Natural killer cell (primary cell): ENCODE measurements at regions of chr3 and their contacts with region 1.

Region 1: GRCh38 chr3:128680602-128681368 is 30.2 kb upstream of the RPN1 start:
- DNase-seq: peak; percentile 93 to 98
- ATAC-seq: peak; percentile 87 to 97 (median 90)
- H3K4me3 ChIP-seq: peak overlapping the region; percentile 88
- H3K4me3 Mint-ChIP-seq: peak overlapping the region; percentile 93
- H3K27ac ChIP-seq: peak overlapping the region; percentile 99
- H3K27ac Mint-ChIP-seq: peak overlapping the region; percentile 81 to 99
- H3K4me1 ChIP-seq: peaks cover 42% of the 10 kb centered on the region
- H3K4me1 Mint-ChIP-seq: peaks cover 28 to 36% of the 10 kb centered on the region in 2 donors
- H3K27me3 ChIP-seq: no peaks in the 10 kb centered on the region
- H3K27me3 Mint-ChIP-seq: peaks cover 6 to 7% of the 10 kb centered on the region in 2 donors
- CTCF ChIP-seq: peak; percentile 95

Region 2: DNA sequence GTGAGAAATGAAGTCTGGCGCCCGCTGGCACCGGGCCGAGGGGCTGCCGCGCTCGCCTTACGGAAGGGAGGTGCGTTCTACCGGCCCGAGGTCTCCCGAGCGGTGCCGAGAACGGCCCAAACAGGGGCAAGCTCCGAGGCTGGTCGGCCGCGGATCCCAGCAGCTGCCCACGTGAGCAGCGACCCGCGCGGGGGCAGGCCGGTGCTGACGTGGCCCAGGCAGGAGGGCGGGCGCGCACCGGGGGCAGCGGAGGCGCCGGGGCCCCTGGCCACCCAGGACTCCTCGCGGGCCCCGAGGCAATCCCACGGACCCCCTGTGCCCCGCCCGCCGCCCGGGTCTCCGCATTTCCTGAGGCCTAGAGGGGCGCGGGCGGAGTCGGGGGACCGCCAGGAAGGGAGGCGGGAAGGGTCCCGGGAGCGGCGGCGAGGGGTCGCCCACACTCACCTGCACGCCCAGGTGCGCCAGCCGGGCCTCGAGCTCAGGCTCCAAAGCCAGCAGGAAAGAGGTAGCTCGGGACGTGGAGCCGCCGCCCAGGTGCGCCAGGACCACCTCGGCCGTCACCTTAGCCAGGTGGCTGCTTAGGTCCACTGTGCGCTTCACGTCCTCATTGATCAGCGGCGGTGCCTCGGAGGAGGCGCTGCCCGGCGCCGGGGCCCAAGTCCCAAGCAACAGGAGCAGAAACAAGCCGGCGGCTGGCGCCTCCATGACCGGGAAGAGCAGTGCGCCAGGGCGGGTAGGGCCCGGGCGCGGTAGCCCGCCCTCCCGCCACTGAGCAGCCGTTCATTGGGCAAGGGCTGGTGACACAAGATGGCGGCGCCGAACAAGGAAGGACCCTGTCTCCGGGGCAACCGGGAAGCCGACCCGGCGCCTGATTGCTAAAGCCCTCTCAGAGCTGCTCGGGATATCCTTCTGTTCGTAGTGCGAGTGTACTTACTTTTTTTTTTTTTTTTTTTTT is 30.4 kb before region 1 on chr3 and contains the start of gene RPN1:
- intact Hi-C with region 1: loop called (anchors 1 kb)
- DNase-seq: peak; percentile 92 to 97
- ATAC-seq: peak; percentile 94 to 99 (median 98)
- H3K4me3 ChIP-seq: peak within 1 kb of the TSS; percentile 100
- H3K4me3 Mint-ChIP-seq: peak within 1 kb of the TSS; percentile 92
- H3K27ac ChIP-seq: peak within 1 kb of the TSS; percentile 98
- H3K27ac Mint-ChIP-seq: peak within 1 kb of the TSS; percentile 86 to 92
- H3K4me1 ChIP-seq: peaks cover 15% of the 10 kb centered on the region
- H3K4me1 Mint-ChIP-seq: peaks cover 28 to 31% of the 10 kb centered on the region in 2 donors
- H3K27me3 ChIP-seq: no peaks in the 10 kb centered on the region
- H3K27me3 Mint-ChIP-seq: no peaks in the 10 kb centered on the region
- CTCF ChIP-seq: no peak
- total RNA-seq, gene RPN1: 90.5 to 130 (median 92.1) TPM

Region 3: DNA sequence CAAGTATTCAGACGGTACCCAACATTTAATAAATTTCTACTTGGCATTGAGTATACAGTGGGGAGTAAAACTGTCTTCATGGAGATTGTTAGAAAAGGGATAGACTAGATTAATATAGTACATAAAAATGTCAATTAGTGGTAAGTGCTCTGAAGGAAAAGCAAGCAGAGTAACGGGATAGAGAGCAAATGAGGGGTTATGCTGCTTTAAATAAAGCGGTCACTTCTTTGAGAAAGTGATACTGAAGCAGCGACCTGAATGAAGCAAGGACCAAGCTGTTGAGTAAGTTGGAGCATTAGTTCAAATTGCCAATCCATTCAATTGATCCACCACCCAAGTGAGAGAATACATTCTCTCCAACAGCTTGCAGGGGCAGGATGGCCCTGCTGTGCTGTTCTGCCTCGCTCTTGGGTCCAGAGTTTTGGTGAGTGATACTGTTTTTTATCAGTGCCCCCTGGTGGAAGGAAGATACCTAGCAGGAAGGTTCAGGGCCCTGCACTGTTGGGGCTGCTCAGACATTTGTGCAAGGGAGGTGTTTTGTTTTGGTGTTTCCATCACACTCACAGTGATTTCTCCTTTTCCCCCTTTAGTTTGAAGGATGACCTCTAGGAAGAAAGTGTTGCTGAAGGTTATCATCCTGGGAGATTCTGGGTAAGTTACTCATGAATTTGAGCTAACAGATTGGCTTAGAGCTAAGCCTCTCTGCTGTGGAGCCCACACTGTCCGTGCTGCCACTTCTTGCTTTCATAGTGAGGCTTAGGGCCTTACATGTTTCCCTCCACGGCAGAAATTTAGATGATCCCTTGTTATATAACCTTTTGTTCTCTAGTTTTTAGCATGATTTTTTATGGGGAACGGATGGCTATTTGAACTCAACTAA is 114.2 kb after region 1 on chr3:
- intact Hi-C with region 1: loop called (anchors 1 kb)
- DNase-seq: peak; percentile 47 to 87
- ATAC-seq: peak; percentile 98 to 100 (median 99)
- H3K4me3 ChIP-seq: no peak overlapping the region
- H3K4me3 Mint-ChIP-seq: no peak overlapping the region
- H3K27ac ChIP-seq: no peak overlapping the region
- H3K27ac Mint-ChIP-seq: peak overlapping the region; percentile 61 to 72
- H3K4me1 ChIP-seq: peaks cover 18% of the 10 kb centered on the region
- H3K4me1 Mint-ChIP-seq: peaks cover 22 to 45% of the 10 kb centered on the region in 2 donors
- H3K27me3 ChIP-seq: no peaks in the 10 kb centered on the region
- H3K27me3 Mint-ChIP-seq: no peaks in the 10 kb centered on the region
- CTCF ChIP-seq: peak; percentile 74

Region 4: GRCh38 chr3:128845778-128846485 is 165.1 kb after region 1 on chr3:
- intact Hi-C with region 1: loop called (anchors 1 kb)
- DNase-seq: peak; percentile 73 to 83
- ATAC-seq: peak; percentile 85 to 91 (median 89)
- H3K4me3 ChIP-seq: peak overlapping the region; percentile 38
- H3K4me3 Mint-ChIP-seq: peak overlapping the region; percentile 92
- H3K27ac ChIP-seq: peak overlapping the region; percentile 12
- H3K27ac Mint-ChIP-seq: peak overlapping the region; percentile 62 to 72
- H3K4me1 ChIP-seq: peaks cover 17% of the 10 kb centered on the region
- H3K4me1 Mint-ChIP-seq: peaks cover 12 to 14% of the 10 kb centered on the region in 2 donors
- H3K27me3 ChIP-seq: no peaks in the 10 kb centered on the region
- H3K27me3 Mint-ChIP-seq: no peaks in the 10 kb centered on the region
- CTCF ChIP-seq: peak; percentile 76